ENCODE measurements at regions of chr1 and their contacts with region 1.

Region 1: GRCh38 chr1:229227298-229227919 is 43.5 kb upstream of the RAB4A start:
- DNase-seq: peak in 1 of 2 experiments; percentile 69
- H3K4me3 ChIP-seq: no peak overlapping the region
- H3K27ac ChIP-seq: no peak overlapping the region
- H3K4me1 ChIP-seq: peaks cover 47% of the 10 kb centered on the region
- H3K27me3 ChIP-seq: peaks cover 27% of the 10 kb centered on the region
- CTCF ChIP-seq: peak; percentile 95

Region 2: DNA sequence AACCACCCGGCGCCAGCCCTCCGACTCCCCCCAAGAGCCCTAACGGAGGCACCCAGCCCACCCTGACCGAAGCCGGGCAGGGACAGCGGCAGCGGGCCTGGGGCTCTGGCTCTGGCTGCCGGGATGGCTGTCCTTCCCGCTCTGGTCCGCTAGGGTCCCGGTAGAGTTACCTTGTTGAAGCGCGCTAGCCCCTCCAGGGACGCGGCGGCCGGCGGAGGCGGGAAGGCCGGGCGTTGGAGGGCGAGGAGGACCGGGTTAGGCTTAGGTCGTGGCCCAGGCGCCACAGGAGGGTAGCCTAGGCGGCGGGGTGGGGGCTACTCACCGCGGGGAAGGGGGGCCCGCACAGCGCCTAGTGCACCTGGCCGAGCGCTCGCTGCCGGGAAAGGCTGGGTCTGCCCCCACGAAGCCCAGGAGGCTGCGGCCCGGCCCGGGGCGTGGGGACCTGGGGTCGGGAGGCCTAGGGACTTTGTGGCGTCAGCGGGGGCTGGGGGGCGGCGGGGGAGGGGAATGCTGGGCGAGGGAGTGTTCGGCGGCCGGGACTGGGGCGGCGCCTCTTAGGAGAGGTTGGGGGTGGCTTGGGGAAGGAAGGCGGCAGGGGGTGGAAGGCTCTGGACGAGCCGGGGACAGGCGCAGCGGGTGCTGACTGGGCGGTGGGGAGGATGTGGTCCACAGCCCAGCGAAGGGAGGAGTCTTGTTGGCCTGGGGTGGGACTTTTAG is 811.0 kb before region 1 on chr1 and contains the start of gene TRIM17:
- CTCF ChIA-PET with region 1: no interaction called
- POLR2A ChIA-PET with region 1: no interaction called
- intact Hi-C with region 1: loop called (anchors 10 kb)
- DNase-seq: peak in 1 of 2 experiments; percentile 79
- H3K4me3 ChIP-seq: peak within 1 kb of the TSS; percentile 64
- H3K27ac ChIP-seq: peak within 1 kb of the TSS; percentile 93
- H3K4me1 ChIP-seq: peaks cover 67% of the 10 kb centered on the region
- H3K27me3 ChIP-seq: no peaks in the 10 kb centered on the region
- CTCF ChIP-seq: peak; percentile 63
- total RNA-seq, gene TRIM17: 47.4 and 55.5 TPM in 2 replicates

Region 3: DNA sequence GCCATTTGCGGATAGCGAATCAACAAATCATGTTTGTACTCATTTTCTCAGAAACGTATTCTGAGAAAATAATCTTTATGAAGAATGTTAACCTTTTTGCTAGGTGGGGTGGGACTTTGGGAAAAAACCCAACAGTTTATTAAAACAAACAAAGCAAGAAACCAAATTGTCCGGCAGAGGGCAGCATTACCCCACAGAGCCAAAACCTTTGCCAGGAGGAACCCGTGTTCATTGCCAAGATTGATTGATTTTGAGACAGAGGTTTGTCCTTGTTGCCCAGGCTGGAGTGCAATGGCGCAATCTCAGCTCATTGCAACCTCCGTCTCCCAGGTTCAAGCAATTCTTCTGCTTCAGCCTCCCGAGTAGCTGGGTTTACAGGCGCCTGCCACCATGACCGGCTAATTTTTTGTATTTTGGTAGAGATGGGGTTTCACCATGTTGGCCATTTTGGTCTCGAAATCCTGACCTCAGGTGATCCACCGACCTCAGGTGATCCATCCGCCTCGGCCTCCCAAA is 563.0 kb before region 1 on chr1:
- CTCF ChIA-PET with region 1: no interaction called
- POLR2A ChIA-PET with region 1: no interaction called
- intact Hi-C with region 1: loop called (anchors 1 kb)
- DNase-seq: peak in 1 of 2 experiments; percentile 53
- H3K4me3 ChIP-seq: no peak overlapping the region
- H3K27ac ChIP-seq: no peak overlapping the region
- H3K4me1 ChIP-seq: no peaks in the 10 kb centered on the region
- H3K27me3 ChIP-seq: 0 out of 2 replicates have a peak, but pooled peaks cover 10% of the 10 kb centered on the region
- CTCF ChIP-seq: peak; percentile 89

Region 4: GRCh38 chr1:228837817-228838716 is 389.3 kb before region 1 on chr1:
- CTCF ChIA-PET with region 1: no interaction called
- POLR2A ChIA-PET with region 1: no interaction called
- intact Hi-C with region 1: loop called (anchors 10 kb)
- DNase-seq: peak; percentile 59 to 86
- H3K4me3 ChIP-seq: no peak overlapping the region
- H3K27ac ChIP-seq: no peak overlapping the region
- H3K4me1 ChIP-seq: peaks cover 12% of the 10 kb centered on the region
- H3K27me3 ChIP-seq: peaks cover 25% of the 10 kb centered on the region
- CTCF ChIP-seq: no peak

Region 5: GRCh38 chr1:229203030-229203751 is 24.2 kb before region 1 on chr1:
- CTCF ChIA-PET with region 1: no interaction called
- POLR2A ChIA-PET with region 1: no interaction called
- intact Hi-C with region 1: no loop called
- DNase-seq: peak; percentile 6 to 54
- H3K4me3 ChIP-seq: no peak overlapping the region
- H3K27ac ChIP-seq: no peak overlapping the region
- H3K4me1 ChIP-seq: peaks cover 17% of the 10 kb centered on the region
- H3K27me3 ChIP-seq: peaks cover 67% of the 10 kb centered on the region
- CTCF ChIP-seq: no peak

Region 6: DNA sequence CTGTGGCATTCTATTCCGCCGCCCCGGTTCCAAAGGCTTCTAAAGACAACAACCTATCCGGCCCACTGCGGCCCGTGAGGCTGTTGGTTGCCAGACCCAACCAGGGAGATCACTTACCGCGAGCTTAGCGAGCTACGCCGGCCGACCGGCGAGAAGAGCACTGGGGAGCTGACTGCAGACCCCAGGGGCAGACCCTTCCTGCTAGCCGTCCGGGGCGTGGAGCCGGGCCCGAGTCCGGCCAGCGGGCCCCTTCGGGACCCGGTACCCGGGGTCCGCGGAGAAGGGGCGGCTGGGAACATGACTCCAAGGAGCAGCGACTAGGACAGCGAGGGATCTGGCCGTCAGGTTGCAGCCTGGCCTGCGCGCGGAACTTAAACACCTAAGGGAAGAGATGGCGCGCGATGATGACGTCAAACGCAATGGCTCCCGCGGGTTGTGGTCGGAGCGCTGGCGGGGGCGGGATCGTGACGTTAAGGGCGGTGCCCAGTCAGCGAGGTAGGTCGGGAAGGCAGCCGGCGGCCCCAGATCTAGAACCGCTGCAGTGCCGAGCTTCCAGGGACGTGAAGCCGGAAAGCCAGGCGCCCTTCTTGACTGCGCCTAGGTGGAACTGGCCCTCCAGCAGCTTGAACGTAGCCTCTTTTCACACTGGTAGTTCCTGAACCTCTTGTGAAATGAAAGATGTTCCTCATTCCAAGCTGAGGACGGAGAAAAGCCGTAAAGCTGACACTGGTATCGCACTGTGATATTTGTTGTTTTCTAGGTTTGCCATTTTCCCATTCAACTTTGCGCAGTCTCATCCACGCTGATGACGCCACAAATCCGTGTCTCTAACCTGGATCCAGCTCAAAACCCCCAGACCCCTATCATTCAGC is 280.8 kb after region 1 on chr1 and contains the start of gene NUP133:
- CTCF ChIA-PET with region 1: interaction called, 14 read pairs
- POLR2A ChIA-PET with region 1: no interaction called
- intact Hi-C with region 1: no loop called
- DNase-seq: peak; percentile 91 to 95
- H3K4me3 ChIP-seq: peak within 1 kb of the TSS; percentile 74
- H3K27ac ChIP-seq: peak within 1 kb of the TSS; percentile 73
- H3K4me1 ChIP-seq: peaks cover 11% of the 10 kb centered on the region
- H3K27me3 ChIP-seq: no peaks in the 10 kb centered on the region
- CTCF ChIP-seq: no peak
- total RNA-seq, gene NUP133: 38.5 and 42.9 TPM in 2 replicates

Measured in PC-9 (cell line).